Caco-2 (cell line): ENCODE measurements at regions of chr3 and their contacts with region 1.

Region 1: DNA sequence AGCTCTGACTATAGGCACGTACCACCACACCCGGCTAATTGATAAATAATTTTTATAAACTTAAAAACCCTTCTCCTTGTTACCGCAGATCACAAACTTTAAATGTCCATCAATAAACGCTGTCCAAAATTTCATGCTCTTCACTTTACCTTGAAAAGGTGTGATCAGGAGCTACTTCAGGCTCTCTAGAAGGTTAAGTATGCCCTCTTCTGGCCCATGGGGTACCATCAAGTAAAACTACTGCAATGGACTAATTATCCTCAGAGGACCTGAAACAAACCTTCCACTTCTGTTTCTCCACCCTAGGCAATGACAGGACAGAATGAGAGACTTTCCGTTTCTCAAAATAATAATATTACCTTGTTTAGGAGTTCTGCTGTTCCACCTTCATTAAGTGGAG is 9.2 kb downstream of the LZTFL1 start:
- DNase-seq: peak; percentile 40 to 48
- H3K4me3 ChIP-seq: no peak overlapping the region
- H3K4me3 Mint-ChIP-seq: no peak overlapping the region
- H3K27ac Mint-ChIP-seq: no peak overlapping the region
- H3K4me1 ChIP-seq: no peaks in the 10 kb centered on the region
- H3K4me1 Mint-ChIP-seq: no peaks in the 10 kb centered on the region
- H3K27me3 ChIP-seq: no peaks in the 10 kb centered on the region
- H3K27me3 Mint-ChIP-seq: no peaks in the 10 kb centered on the region
- CTCF ChIP-seq: peak; percentile 42 to 71

Region 2: GRCh38 chr3:45507820-45508317 is 324.8 kb before region 1 on chr3:
- CTCF ChIA-PET with region 1: interaction called, 6 read pairs
- POLR2A ChIA-PET with region 1: no interaction called
- intact Hi-C with region 1: loop called (anchors 1 kb)
- DNase-seq: peak in 1 of 2 experiments; percentile 15
- H3K4me3 ChIP-seq: no peak overlapping the region
- H3K4me3 Mint-ChIP-seq: no peak overlapping the region
- H3K27ac Mint-ChIP-seq: no peak overlapping the region
- H3K4me1 ChIP-seq: no peaks in the 10 kb centered on the region
- H3K4me1 Mint-ChIP-seq: peaks cover 6% of the 10 kb centered on the region
- H3K27me3 ChIP-seq: no peaks in the 10 kb centered on the region
- H3K27me3 Mint-ChIP-seq: no peaks in the 10 kb centered on the region
- CTCF ChIP-seq: peak in 1 of 2 experiments; percentile 24

Region 3: GRCh38 chr3:45528429-45528828 is 304.3 kb before region 1 on chr3:
- CTCF ChIA-PET with region 1: no interaction called
- POLR2A ChIA-PET with region 1: no interaction called
- intact Hi-C with region 1: no loop called
- DNase-seq: no peak
- H3K4me3 ChIP-seq: no peak overlapping the region
- H3K4me3 Mint-ChIP-seq: no peak overlapping the region
- H3K27ac Mint-ChIP-seq: no peak overlapping the region
- H3K4me1 ChIP-seq: no peaks in the 10 kb centered on the region
- H3K4me1 Mint-ChIP-seq: no peaks in the 10 kb centered on the region
- H3K27me3 ChIP-seq: no peaks in the 10 kb centered on the region
- H3K27me3 Mint-ChIP-seq: no peaks in the 10 kb centered on the region
- CTCF ChIP-seq: no peak

Region 4: DNA sequence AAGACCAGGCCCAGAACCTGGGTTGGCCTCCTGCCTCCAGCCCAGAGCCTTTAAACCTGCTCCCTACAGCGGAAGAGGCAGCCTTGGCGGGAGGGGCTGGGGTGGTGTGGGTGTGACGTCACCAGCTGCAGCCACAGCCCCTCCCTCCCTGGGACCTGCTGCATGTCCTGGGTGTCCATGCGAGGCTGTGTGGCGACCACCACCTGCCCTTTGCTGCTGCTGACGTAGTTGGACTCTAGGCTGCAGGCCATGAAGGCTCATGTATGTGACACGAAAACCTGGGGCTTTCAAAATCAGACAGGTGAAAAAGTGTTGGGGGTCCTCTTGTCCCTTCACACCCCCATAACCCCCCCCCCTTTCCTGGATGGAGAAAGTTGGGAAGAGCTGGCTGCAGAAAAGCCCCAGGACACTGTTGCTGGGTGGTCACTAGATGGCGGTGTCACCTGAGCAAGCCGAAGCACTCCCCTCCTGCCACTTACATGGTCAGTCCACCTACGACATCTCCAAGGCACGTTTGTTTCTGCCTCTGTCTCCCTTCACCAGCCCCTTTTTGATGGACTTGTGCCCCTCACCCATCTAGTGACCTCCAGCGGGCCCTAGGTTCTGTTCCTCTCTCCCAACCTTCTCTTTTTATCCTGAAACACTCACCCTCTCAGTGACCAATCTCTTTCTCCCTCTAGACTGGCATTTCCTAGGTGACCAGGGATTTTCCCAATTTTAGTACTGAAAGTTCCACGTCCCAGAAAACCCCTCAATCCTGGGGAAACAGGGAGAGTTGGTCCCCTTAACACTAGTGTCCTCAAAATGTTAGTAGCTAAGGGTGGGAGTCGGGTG is 71.6 kb before region 1 on chr3:
- CTCF ChIA-PET with region 1: interaction called, 30 read pairs
- POLR2A ChIA-PET with region 1: no interaction called
- intact Hi-C with region 1: loop called (anchors 1 kb)
- DNase-seq: peak; percentile 64 to 66
- H3K4me3 ChIP-seq: no peak overlapping the region
- H3K4me3 Mint-ChIP-seq: no peak overlapping the region
- H3K27ac Mint-ChIP-seq: peak overlapping the region; percentile 60
- H3K4me1 ChIP-seq: peaks cover 13% of the 10 kb centered on the region
- H3K4me1 Mint-ChIP-seq: peaks cover 17% of the 10 kb centered on the region
- H3K27me3 ChIP-seq: no peaks in the 10 kb centered on the region
- H3K27me3 Mint-ChIP-seq: no peaks in the 10 kb centered on the region
- CTCF ChIP-seq: peak; percentile 67 to 80

Region 5: DNA sequence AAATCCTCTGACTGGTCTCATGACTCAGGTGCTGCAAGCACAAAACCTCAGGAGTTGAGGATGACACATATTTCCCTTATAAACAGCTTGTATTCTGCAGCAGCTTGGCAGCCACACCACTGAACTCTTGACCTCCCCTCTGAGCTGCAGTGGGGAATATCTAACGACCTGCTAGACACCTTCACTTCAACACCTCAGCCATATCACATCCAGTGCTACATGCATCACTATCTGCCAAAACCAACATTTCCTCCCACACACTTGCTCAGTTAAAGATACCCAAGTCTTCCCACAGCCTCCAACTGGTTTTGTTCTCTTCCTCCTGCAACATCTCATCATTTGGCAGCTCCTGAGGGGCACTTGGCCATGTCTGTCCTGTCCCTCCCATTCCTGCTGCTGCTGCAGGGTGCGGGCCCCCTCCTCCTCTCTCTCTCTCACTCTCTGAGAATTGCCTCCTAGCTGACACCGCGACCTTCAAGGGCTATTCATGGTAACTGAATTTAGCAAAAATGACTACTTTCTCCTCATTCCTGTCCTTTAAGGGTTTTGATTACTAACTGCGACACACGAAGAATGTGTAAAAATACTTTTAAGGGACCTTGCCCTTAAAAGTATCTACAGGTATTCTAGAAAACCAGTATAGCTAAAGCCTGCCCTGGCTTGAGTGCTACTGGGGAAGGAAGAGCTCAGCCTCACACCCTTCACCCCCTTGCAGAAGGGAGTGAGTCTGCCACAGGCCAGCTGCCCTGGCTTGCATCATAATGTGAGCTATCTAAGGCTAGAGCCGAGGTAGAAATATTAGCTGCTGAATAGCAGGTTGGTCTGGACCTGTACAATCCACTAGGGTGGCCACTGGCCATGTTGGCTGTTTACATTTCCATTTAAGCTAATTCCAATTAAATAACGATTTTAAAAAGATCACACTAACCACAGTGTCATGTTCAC is 48.7 kb after region 1 on chr3:
- CTCF ChIA-PET with region 1: no interaction called
- POLR2A ChIA-PET with region 1: no interaction called
- intact Hi-C with region 1: no loop called
- DNase-seq: no peak
- H3K4me3 ChIP-seq: no peak overlapping the region
- H3K4me3 Mint-ChIP-seq: no peak overlapping the region
- H3K27ac Mint-ChIP-seq: no peak overlapping the region
- H3K4me1 ChIP-seq: no peaks in the 10 kb centered on the region
- H3K4me1 Mint-ChIP-seq: no peaks in the 10 kb centered on the region
- H3K27me3 ChIP-seq: no peaks in the 10 kb centered on the region
- H3K27me3 Mint-ChIP-seq: peaks cover 2% of the 10 kb centered on the region
- CTCF ChIP-seq: no peak